Tibial artery (tissue), 4 donors: ENCODE measurements at regions of chr17 and their contacts with region 1.

Region 1: GRCh38 chr17:34961093-34961911 is at the starts of genes CCT6B and ZNF830:
- DNase-seq: peak; percentile 92 to 94
- H3K4me3 ChIP-seq: peak within 1 kb of the TSS; percentile 68 to 84
- H3K27ac ChIP-seq: peak within 1 kb of the TSS; percentile 88 to 90
- H3K4me1 ChIP-seq: peaks cover 0 to 17% (median 11%) of the 10 kb centered on the region in 4 donors
- H3K27me3 ChIP-seq: no peaks in the 10 kb centered on the region
- CTCF ChIP-seq: no peak

Region 2: DNA sequence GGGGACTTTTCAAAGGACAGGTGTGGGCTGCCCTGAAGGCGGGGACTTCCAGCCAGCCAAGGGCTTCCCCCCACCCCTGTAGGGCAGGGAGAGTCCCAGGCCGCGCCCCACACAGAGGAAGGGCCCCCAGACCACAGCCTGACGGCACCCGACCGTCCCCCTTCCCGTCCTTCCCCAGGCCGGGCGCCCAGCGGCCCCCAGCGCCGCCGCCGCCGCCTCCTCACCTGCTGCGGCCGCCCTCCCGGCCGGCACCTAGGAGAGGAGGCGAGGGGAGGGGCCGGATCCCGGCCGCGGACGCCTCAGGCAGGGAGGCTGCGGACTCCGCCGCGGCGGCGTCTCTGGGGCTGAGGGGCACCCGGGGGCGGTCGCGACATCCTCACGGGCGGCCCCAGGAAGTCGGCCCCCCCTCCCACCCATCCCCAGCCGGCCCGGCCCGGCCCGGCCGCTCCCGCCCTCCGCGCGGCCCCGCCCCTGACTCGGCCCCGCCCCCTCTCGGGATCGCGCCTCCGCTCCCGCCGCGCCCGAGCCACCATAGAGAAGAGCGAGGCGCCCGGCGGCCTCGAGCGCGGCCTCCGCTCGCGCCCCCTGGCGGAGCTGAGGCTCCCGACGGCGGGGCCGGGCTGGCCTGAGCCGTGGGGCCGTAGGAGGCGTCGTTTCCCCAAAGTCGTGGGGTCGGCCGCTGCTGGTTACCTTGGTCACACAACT is 127.7 kb after region 1 on chr17:
- intact Hi-C with region 1: loop called (anchors 1 kb)
- DNase-seq: peak; percentile 83 to 93
- H3K4me3 ChIP-seq: peak overlapping the region; percentile 96 to 97
- H3K27ac ChIP-seq: peak overlapping the region; percentile 91 to 93
- H3K4me1 ChIP-seq: peaks cover 0 to 24% (median 15%) of the 10 kb centered on the region in 4 donors
- H3K27me3 ChIP-seq: no peaks in the 10 kb centered on the region
- CTCF ChIP-seq: peak; percentile 73 to 87